ENCODE measurements at regions of chr12 and their contacts with region 1.

Region 1: GRCh38 chr12:118451418-118451817 is 75.1 kb downstream of the SUDS3 start:
- DNase-seq: no peak
- ATAC-seq: no peak
- H3K4me3 ChIP-seq: no peak overlapping the region
- H3K27ac ChIP-seq: no peak overlapping the region
- H3K4me1 ChIP-seq: peaks cover 2% of the 10 kb centered on the region
- H3K27me3 ChIP-seq: no peaks in the 10 kb centered on the region

Region 2: GRCh38 chr12:118618692-118619091 is 167.3 kb after region 1 on chr12:
- intact Hi-C with region 1: loop called in 1 of 4 experiments (anchors 5 kb)
- DNase-seq: no peak
- ATAC-seq: no peak
- H3K4me3 ChIP-seq: no peak overlapping the region
- H3K27ac ChIP-seq: no peak overlapping the region
- H3K4me1 ChIP-seq: no peaks in the 10 kb centered on the region
- H3K27me3 ChIP-seq: no peaks in the 10 kb centered on the region

Region 3: DNA sequence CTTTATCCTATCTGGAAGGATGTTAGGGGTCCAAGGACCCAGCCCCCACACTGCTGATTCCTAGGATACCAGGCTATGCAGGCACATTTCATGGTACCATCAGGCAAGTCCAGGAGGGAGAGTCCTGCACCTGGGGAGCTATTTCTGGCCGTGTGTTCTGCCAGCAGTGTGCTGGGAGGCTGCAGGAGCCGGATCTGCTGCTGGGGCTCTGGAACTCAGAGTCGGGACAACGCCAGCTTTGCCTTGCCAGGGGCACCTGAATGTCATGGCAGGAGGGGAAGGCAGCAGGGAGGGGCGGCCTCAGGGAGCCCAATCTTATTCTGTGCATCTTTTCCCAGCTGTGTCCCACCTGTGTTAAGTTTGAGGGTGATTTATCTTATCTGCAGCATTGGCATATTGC is 547.7 kb after region 1 on chr12:
- intact Hi-C with region 1: no loop called
- DNase-seq: peak in 2 of 3 donors; percentile 43 to 56
- ATAC-seq: peak in 1 of 2 donors; percentile 11
- H3K4me3 ChIP-seq: no peak overlapping the region
- H3K27ac ChIP-seq: no peak overlapping the region
- H3K4me1 ChIP-seq: no peaks in the 10 kb centered on the region
- H3K27me3 ChIP-seq: no peaks in the 10 kb centered on the region

Region 4: GRCh38 chr12:119169147-119169546 is 717.7 kb after region 1 on chr12:
- intact Hi-C with region 1: no loop called
- DNase-seq: no peak
- ATAC-seq: no peak
- H3K4me3 ChIP-seq: no peak overlapping the region
- H3K27ac ChIP-seq: no peak overlapping the region
- H3K4me1 ChIP-seq: no peaks in the 10 kb centered on the region
- H3K27me3 ChIP-seq: no peaks in the 10 kb centered on the region

Measured in right cardiac atrium (tissue), 5 donors.